AG04450 (cell line): ENCODE measurements at regions of chr7 and their contacts with region 1.

Region 1: GRCh38 chr7:30564243-30564892 is 30.3 kb upstream of the GARS1 start:
- DNase-seq: peak; percentile 61
- H3K4me3 ChIP-seq: no peak overlapping the region
- H3K27ac ChIP-seq: no peak overlapping the region
- H3K27me3 ChIP-seq: no peaks in the 10 kb centered on the region
- CTCF ChIP-seq: peak; percentile 83

Region 2: DNA sequence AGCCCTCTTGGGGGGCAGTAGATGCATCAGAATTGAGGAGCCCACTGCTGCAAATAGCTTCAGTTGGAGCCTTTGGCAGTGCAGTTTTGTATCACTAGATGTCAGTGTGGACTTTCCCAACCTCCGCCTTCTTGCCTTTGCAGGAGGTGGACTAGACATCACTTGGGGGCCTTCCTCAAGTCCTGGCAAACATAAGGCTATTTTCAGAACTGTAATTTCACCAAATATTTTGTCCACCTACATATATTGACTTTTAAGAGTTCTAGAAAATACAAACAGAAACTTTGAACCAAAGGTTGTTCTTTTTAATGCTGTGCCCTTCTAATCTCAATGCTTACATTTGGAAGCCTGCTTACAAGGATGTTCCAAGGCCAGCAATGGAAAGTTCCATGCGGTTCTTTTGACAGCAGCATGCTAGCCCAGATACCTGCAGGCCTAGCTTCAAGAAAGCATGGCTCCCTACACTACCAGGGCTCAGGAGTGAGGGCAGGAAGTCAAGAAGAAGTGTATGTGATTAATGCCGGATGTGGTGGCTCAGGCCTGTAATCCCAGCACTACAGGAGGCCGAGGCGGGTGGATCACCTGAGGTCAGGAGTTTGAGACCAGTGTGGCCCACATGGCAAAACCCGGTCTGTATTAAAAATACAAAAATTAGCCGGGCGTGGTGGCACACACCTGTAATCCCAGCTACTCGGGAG is 288.0 kb before region 1 on chr7:
- CTCF ChIA-PET with region 1: interaction called, 93 read pairs
- POLR2A ChIA-PET with region 1: no interaction called
- DNase-seq: no peak
- H3K4me3 ChIP-seq: no peak overlapping the region
- H3K27ac ChIP-seq: no peak overlapping the region
- H3K27me3 ChIP-seq: peaks cover 7% of the 10 kb centered on the region
- CTCF ChIP-seq: peak; percentile 82

Region 3: GRCh38 chr7:30478349-30479201 is 85.8 kb before region 1 on chr7 and contains the start of gene NOD1:
- CTCF ChIA-PET with region 1: interaction called, 10 read pairs
- POLR2A ChIA-PET with region 1: no interaction called
- DNase-seq: no peak
- H3K4me3 ChIP-seq: peak within 1 kb of the TSS; percentile 75
- H3K27ac ChIP-seq: peak within 1 kb of the TSS; percentile 74
- H3K27me3 ChIP-seq: no peaks in the 10 kb centered on the region
- CTCF ChIP-seq: no peak
- polyA plus RNA-seq, gene NOD1: 3.3 and 3.5 TPM in 2 replicates

Region 4: GRCh38 chr7:30510124-30511075 is 54.0 kb before region 1 on chr7:
- CTCF ChIA-PET with region 1: interaction called, 90 read pairs
- POLR2A ChIA-PET with region 1: no interaction called
- DNase-seq: no peak
- H3K4me3 ChIP-seq: no peak overlapping the region
- H3K27ac ChIP-seq: no peak overlapping the region
- H3K27me3 ChIP-seq: no peaks in the 10 kb centered on the region
- CTCF ChIP-seq: peak; percentile 82

Region 5: DNA sequence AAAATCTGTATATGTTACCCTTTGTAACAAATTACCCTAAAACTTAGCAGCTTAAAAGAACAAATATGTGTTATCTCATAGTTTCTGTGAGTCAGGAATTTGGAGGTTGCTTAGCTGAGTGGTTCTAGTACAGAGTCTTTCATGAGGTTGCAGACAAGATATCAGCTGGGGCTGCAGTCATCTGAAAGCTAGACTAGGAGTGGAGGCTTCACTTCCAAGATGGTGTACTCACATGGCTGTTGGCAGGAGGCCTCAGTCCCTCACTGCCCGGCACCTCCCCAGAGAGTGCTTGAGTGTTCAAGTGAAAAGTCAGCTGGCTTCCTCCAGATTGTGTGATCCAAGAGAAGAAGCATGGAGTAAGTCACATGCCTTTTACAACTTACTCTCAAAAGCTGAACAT is 42.8 kb before region 1 on chr7:
- CTCF ChIA-PET with region 1: interaction called, 10 read pairs
- POLR2A ChIA-PET with region 1: no interaction called
- DNase-seq: no peak
- H3K4me3 ChIP-seq: no peak overlapping the region
- H3K27ac ChIP-seq: no peak overlapping the region
- H3K27me3 ChIP-seq: no peaks in the 10 kb centered on the region
- CTCF ChIP-seq: no peak

Region 6: GRCh38 chr7:30548762-30549344 is 15.5 kb before region 1 on chr7:
- CTCF ChIA-PET with region 1: interaction called, 184 read pairs
- POLR2A ChIA-PET with region 1: no interaction called
- DNase-seq: peak; percentile 36
- H3K4me3 ChIP-seq: no peak overlapping the region
- H3K27ac ChIP-seq: no peak overlapping the region
- H3K27me3 ChIP-seq: no peaks in the 10 kb centered on the region
- CTCF ChIP-seq: peak; percentile 83

Region 7: GRCh38 chr7:30740424-30741181 is 176.2 kb after region 1 on chr7:
- CTCF ChIA-PET with region 1: interaction called, 11 read pairs
- POLR2A ChIA-PET with region 1: no interaction called
- DNase-seq: peak; percentile 23
- H3K4me3 ChIP-seq: no peak overlapping the region
- H3K27ac ChIP-seq: no peak overlapping the region
- H3K27me3 ChIP-seq: peaks cover 23% of the 10 kb centered on the region
- CTCF ChIP-seq: peak; percentile 99